AG04449 (cell line): ENCODE measurements at regions of chr4 and their contacts with region 1.

Region 1: DNA sequence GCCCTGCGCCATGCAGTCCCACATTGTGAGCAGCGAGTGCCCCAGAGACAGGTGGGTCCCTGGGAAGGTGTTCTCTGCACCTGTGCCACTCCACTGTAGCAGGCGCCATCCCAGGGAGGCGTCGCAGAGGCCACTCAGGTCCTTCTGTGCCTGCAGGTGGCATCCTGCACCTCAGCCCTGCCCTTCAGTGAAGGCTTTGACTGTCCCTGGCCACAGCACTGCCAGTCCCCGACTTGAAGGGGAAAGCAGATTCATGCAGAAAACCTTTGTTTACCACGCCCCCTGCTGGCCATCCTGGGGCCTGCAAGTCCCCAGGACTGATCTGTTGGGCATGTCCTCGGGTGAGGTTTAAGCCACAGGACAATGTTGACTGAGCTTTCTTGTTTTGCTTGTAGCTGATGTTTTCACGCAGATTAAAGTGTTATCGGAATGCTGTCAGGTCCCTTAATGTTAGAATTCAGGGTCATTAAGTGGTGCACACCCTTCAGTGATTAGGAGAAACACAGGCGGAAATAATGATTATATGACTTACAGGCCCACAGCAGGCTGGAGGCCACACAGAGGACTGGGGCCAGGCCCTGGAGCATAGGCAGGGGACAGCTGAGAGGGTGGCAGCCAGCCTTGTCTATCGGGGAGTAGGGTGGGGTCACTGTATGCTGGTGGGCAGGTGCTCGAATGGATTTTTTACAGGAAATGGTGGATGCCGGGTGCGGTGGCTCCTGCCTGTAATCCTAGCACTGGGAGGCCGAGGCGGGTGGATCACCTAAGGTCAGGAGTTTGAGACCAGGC is 5.0 kb downstream of the TACC3 start:
- DNase-seq: no peak
- H3K4me3 ChIP-seq: no peak overlapping the region
- CTCF ChIP-seq: peak; percentile 87

Region 2: GRCh38 chr4:1706358-1706757 is 20.0 kb before region 1 on chr4:
- CTCF ChIA-PET with region 1: interaction called, 56 read pairs
- POLR2A ChIA-PET with region 1: interaction called, 3 read pairs
- DNase-seq: no peak
- H3K4me3 ChIP-seq: no peak overlapping the region
- CTCF ChIP-seq: no peak

Region 3: GRCh38 chr4:1736812-1737211 is 10.5 kb after region 1 on chr4:
- CTCF ChIA-PET with region 1: interaction called, 83 read pairs
- POLR2A ChIA-PET with region 1: no interaction called
- DNase-seq: no peak
- H3K4me3 ChIP-seq: no peak overlapping the region
- CTCF ChIP-seq: no peak

Region 4: GRCh38 chr4:1784789-1785591 is 58.6 kb after region 1 on chr4:
- CTCF ChIA-PET with region 1: no interaction called
- POLR2A ChIA-PET with region 1: no interaction called
- DNase-seq: no peak
- H3K4me3 ChIP-seq: no peak overlapping the region
- CTCF ChIP-seq: no peak

Region 5: GRCh38 chr4:1809754-1810511 is 83.6 kb after region 1 on chr4:
- CTCF ChIA-PET with region 1: interaction called, 21 read pairs
- POLR2A ChIA-PET with region 1: no interaction called
- DNase-seq: no peak
- H3K4me3 ChIP-seq: no peak overlapping the region
- CTCF ChIP-seq: peak; percentile 97